Ascending aorta (tissue), 2 donors: ENCODE measurements at regions of chr11 and their contacts with region 1.

Region 1: GRCh38 chr11:59171508-59172322 is at the start of gene DTX4:
- DNase-seq: peak; percentile 74 to 97
- H3K4me3 ChIP-seq: peak within 1 kb of the TSS; percentile 69 to 91
- H3K27ac ChIP-seq: peak within 1 kb of the TSS; percentile 27 to 32
- H3K4me1 ChIP-seq: peaks cover 0 to 2% of the 10 kb centered on the region in 2 donors
- H3K27me3 ChIP-seq: no peaks in the 10 kb centered on the region
- CTCF ChIP-seq: peak; percentile 71 to 92 (median 72)
- total RNA-seq, gene DTX4: 9.6 TPM

Region 2: GRCh38 chr11:59142530-59143507 is 28.9 kb before region 1 on chr11 and contains the start of gene FAM111A:
- intact Hi-C with region 1: loop called (anchors 2 kb)
- DNase-seq: peak; percentile 70 to 93
- H3K4me3 ChIP-seq: peak within 1 kb of the TSS; percentile 79 to 90
- H3K27ac ChIP-seq: peak within 1 kb of the TSS; percentile 95 to 96
- H3K4me1 ChIP-seq: peaks cover 0 to 9% of the 10 kb centered on the region in 2 donors
- H3K27me3 ChIP-seq: no peaks in the 10 kb centered on the region
- CTCF ChIP-seq: peak in 1 of 3 experiments; percentile 18
- total RNA-seq, gene FAM111A: 54.3 TPM

Region 3: DNA sequence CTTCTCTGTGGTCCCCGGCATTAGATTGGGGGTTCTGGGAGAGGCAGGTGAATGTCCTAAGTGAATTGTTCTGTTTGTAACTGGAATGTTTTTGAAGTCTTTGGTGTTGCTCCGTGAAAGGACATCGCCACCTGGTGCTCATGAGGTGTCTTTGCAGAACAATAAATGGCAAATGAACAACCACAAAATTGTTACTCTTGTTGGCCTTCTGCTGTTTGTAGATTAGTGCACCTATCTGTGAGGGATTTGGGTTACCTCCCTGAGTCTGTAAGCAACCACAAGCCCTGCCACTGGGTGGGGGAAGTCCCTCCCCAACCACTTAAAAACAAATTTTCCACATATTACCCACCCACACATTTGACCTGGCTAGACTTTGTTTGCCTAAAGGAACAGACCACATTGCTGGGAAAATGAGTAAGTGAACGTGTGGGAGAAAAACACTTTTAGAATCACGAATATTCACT is 36.3 kb after region 1 on chr11:
- intact Hi-C with region 1: loop called (anchors 1 kb)
- DNase-seq: no peak
- H3K4me3 ChIP-seq: peak overlapping the region in 1 of 2 donors; percentile 13
- H3K27ac ChIP-seq: no peak overlapping the region
- H3K4me1 ChIP-seq: peaks cover 2 to 6% of the 10 kb centered on the region in 2 donors
- H3K27me3 ChIP-seq: no peaks in the 10 kb centered on the region
- CTCF ChIP-seq: peak; percentile 69 to 78 (median 76)

Region 4: DNA sequence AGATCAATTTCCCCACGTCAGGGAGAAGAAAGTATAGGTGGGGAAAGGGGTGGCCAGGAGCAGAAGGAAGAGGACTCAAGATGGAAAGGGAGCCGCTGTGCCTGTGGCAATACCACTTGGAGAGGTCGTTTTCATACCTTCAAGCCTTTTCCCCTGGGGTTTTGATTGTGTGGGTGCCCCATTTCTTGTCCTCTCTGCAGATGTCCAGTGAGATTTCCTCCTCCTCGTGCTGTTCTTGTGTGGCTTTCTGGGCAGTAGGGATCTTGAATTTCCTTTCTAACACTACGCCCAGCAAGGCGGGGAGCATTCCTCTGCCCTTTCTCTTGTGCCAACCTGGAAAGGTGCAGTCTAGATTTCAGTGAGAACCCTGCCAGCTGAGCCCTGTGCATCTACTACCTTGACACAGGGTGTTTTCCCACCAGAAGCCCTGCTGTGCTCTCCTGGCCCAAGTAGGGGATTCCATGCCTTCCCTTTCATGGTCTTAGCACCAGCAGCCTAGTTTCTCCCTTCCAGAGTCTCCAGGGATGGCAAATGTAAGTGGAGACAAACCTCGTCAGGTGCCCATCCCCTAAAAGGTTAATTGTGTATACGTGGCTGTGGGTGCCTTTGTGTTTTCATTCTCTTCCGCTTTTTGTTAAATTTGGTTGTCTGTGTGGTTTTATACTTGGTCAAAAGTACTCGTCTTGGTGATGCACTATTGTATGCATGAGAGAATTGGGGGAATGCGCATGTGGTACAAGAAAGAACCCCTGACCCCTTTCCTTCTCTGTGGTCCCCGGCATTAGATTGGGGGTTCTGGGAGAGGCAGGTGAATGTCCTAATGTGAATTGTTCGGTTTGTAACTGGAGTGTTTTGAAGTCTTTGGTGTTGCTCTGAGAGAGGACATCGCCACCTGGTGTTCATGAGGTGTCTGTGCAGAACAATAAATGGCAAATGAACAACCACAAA is 112.4 kb after region 1 on chr11:
- intact Hi-C with region 1: loop called (anchors 1 kb)
- DNase-seq: no peak
- H3K4me3 ChIP-seq: no peak overlapping the region
- H3K27ac ChIP-seq: no peak overlapping the region
- H3K4me1 ChIP-seq: no peaks in the 10 kb centered on the region
- H3K27me3 ChIP-seq: no peaks in the 10 kb centered on the region
- CTCF ChIP-seq: peak; percentile 59 to 74 (median 73)